Right ventricle myocardium inferior (tissue), 1 donor: ENCODE measurements at regions of chr4 and their contacts with region 1.

Region 1: GRCh38 chr4:182938205-182938645 is 21.0 kb upstream of the DCTD start:
- DNase-seq: peak; percentile 83
- ATAC-seq: peak; percentile 96

Region 2: DNA sequence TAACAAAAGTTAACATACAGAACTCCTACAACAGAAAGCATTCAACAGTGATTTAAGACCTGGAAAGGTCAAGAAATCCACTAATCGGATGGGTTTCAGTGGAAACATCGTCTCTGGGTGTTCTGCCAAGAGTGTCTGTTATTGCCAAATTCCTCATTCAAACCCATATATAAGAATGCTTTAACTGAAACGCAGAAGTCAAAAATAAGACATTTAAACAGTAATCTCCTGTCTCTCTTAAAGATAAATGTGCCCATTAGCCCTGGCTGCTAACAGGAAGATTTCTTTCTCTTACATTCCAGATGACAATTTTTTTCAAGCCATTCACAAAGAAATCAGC is 52.5 kb before region 1 on chr4:
- intact Hi-C with region 1: no loop called
- DNase-seq: no peak
- ATAC-seq: no peak

Region 3: DNA sequence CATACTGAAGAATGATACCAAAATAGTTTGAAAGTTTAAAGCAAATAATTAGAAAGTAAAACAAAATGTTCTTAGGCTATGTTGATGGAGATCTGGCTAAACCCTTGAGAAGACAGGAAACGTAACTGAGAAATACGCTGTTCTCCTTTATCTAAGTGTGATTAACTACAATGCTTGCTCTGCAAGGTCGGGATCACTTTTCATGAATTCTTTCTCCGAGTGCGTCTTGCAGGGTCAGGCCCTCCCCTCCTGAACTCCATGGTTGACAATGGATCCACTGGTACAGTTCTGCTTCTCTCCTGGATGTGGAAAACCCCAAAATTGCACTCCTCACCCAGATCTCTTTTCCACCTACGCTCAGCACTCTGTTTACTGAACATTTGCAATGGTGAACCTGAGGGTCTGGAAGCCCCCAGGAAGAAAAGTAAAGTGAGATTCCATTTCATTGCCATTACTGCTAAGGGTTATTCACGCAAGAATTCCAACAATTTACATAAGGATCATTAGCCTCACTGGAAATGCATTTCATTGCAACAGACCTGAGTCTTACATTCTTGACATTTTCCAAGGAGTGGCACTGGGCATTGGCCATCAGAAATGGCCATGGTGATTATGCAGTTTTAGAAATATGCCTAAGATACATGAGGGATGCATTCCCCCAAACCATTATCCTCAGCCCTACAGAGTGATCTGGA is 136.2 kb after region 1 on chr4:
- intact Hi-C with region 1: loop called (anchors 5 kb)
- DNase-seq: no peak
- ATAC-seq: no peak

Region 4: GRCh38 chr4:183261953-183262775 is 323.9 kb after region 1 on chr4:
- intact Hi-C with region 1: loop called (anchors 1 kb)
- DNase-seq: peak; percentile 87
- ATAC-seq: peak; percentile 93

Region 5: GRCh38 chr4:183407128-183407585 is 468.9 kb after region 1 on chr4:
- intact Hi-C with region 1: loop called (anchors 5 kb)
- DNase-seq: peak; percentile 93
- ATAC-seq: peak; percentile 94